Breast epithelium (tissue), 4 donors: ENCODE measurements at regions of chr10 and their contacts with region 1.

Region 1: GRCh38 chr10:130790339-130790738 is 521.2 kb downstream of the TCERG1L start:
- DNase-seq: no peak
- H3K4me3 ChIP-seq: no peak overlapping the region
- H3K27ac ChIP-seq: no peak overlapping the region
- H3K4me1 ChIP-seq: no peaks in the 10 kb centered on the region
- H3K27me3 ChIP-seq: peaks cover 0 to 25% of the 10 kb centered on the region in 2 donors
- CTCF ChIP-seq: no peak
- POLR2A ChIP-seq: no peak

Region 2: DNA sequence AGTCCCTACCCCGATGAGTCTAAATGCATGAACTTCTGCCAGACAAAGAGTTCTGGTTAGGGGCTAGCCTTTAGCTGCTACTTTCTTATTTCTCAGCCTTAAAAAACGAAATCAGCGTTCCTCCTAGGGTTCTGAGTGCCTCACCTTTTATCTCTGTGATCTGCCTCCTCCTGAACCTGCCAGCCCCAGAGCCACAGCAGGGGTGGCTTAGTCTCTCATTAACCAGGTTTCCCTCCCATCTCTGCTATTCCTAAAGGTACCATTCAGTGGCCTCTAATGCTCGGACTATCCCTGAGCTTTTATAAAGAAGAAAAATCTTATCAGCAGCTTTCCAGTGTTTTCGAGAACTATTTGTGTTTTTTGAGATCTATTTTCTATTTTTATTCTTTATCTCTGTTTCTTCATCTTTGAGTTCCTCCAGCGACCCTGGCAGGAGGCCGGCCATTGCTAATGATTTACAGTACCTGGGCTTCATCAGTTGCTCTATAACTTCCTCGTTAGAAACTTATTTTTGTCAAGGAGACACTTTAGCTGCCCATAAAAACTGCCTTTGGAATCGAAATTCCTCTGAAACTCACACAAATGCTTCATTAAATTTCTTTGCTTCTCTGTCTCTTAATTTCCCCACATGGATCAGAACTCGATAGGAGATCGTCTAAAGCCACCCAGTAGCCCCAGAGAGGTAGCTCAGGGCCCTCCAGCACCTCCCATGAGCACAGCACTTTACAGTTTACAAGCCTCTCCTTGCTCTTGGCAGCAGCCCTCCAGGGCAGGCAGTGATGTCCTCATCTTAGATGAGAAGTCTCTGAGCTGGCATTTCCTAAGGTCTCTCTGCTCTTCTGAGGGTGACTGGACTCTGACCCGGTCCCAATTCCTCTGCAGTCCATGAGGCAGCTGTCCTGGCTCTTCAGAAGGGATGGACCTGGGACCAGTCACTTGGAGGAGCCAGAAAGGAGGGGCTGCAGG is 975.4 kb before region 1 on chr10:
- intact Hi-C with region 1: loop called (anchors 10 kb)
- DNase-seq: no peak
- H3K4me3 ChIP-seq: no peak overlapping the region
- H3K27ac ChIP-seq: peak overlapping the region in 1 of 2 donors; percentile 65
- H3K4me1 ChIP-seq: no peaks in the 10 kb centered on the region
- H3K27me3 ChIP-seq: no peaks in the 10 kb centered on the region
- CTCF ChIP-seq: no peak
- POLR2A ChIP-seq: no peak